ENCODE measurements at regions of chr4 and their contacts with region 1.

Region 1: DNA sequence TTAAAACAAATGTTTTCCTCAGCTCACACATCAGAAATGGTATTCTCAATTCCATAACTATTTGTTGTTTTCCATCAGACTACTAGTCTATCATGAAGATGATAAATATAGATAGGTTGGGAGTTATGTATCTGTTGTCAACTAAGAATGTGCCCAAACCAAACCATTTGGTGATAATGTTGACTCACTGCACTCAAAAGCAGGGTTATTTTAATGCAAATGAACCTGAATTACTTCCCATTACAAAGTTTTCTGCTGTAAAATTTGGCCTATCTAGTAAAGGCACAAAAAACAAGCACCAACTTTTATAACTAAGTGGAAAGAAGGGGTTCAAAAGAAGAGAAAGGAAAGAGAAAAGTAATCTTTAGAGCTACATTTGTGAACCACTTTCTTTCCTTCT is 93.5 kb downstream of the TBCK start:
- DNase-seq: no peak
- H3K4me3 Mint-ChIP-seq: no peak overlapping the region
- H3K27ac Mint-ChIP-seq: no peak overlapping the region
- H3K4me1 Mint-ChIP-seq: no peaks in the 10 kb centered on the region
- H3K27me3 Mint-ChIP-seq: no peaks in the 10 kb centered on the region

Region 2: DNA sequence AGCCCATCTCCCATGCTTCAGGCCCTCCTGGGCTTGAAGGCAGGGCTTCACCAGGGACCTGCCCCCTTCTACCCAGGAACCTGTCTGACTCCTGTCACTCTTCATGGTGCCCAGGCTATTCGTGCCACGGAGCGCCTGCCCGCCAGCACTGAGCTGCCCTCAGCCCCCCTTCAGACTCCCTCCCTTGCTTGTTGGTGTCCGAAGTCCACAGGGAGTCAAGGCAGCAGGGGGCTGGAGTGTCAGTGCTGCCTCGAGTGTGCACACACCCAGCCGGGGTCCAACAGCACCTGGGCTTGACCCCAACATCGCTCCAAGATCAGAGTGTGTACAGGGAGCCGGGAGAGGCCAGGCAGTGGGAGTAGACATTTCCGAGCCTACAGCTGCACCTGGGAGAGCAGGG is 33.6 kb after region 1 on chr4:
- intact Hi-C with region 1: no loop called
- DNase-seq: no peak
- H3K4me3 Mint-ChIP-seq: no peak overlapping the region
- H3K27ac Mint-ChIP-seq: no peak overlapping the region
- H3K4me1 Mint-ChIP-seq: no peaks in the 10 kb centered on the region
- H3K27me3 Mint-ChIP-seq: no peaks in the 10 kb centered on the region

Region 3: DNA sequence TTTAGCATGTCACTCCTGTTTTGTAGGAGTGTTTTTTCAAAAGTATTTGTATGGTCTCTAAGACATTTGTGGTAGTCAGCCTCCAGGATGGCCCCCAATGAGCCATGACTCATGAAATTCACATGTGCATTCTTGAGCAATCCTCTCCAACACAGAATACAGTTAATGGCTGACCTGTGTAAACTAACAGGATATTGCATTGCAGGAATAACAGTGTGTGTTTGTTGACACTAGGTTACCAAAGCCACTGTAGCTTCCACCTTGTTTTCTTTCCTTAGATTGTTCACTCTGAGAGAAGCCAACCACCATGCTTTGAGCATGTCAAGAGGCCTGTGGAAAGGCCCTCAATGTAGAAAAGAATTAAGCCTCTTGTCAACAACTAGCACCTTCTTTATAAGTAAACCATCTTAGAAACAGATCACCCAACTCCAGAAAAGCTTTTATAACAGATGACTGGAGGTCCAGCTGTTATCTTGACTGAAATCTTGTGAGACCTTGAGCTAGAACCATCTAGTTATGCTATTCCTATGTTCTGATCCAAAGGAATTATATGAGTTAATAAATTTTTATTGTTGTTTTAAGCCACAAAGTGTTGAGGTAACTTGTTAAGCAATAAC is 64.9 kb after region 1 on chr4:
- intact Hi-C with region 1: loop called (anchors 10 kb)
- DNase-seq: no peak
- H3K4me3 Mint-ChIP-seq: no peak overlapping the region
- H3K27ac Mint-ChIP-seq: no peak overlapping the region
- H3K4me1 Mint-ChIP-seq: peaks cover 2% of the 10 kb centered on the region
- H3K27me3 Mint-ChIP-seq: no peaks in the 10 kb centered on the region

Region 4: GRCh38 chr4:106369456-106370060 is 147.0 kb after region 1 on chr4:
- intact Hi-C with region 1: no loop called
- DNase-seq: peak; percentile 66
- H3K4me3 Mint-ChIP-seq: no peak overlapping the region
- H3K27ac Mint-ChIP-seq: no peak overlapping the region
- H3K4me1 Mint-ChIP-seq: no peaks in the 10 kb centered on the region
- H3K27me3 Mint-ChIP-seq: peaks cover 20% of the 10 kb centered on the region